CD8-positive, alpha-beta memory T cell (primary cell): ENCODE measurements at regions of chr3 and their contacts with region 1.

Region 1: DNA sequence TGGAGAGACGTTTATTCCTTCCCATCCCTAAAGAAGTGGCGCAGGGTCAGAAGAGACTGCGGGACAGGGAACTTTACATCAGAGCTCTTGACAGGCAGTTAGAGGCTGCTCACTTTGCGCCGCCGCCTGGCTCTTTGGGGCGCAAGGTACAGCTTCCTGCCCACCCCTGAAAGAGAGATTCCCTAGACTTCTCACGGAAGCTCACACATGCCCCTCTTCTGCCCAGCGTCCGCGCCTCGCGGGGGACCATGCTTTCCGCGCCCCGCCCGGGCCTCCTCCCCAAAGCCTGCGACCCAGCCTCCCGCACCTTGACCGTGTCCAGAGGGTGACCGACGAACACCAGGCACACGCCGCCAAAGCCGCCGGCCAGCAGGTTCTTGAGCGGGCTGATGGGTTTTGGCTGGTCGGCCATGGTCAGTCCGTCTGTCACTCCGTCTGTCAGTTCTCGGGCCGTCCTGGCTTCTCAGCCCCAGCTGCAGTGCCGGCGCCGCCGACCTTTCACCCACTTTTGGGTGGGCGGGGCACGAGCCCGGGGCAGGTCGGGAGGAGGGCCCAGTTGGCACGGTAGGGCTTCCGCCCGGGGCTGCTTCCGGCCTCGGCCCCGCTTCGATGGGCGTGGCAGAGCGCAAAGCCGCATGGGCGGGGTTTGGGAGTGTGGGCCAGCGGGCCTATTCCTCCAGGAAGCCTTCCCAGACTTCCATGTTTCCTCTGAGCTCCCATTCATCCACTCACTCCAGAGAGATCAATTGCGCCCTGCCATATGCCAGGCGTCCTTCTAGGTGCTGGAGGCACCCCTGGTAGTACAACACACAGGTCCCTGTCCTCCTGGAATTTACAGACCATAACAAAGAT is at the start of gene SLC25A20:
- DNase-seq: peak; percentile 83 to 91 (median 86)
- H3K4me3 ChIP-seq: peak within 1 kb of the TSS; percentile 85
- H3K4me3 Mint-ChIP-seq: peak within 1 kb of the TSS; percentile 95 to 99 (median 96)
- H3K27ac ChIP-seq: peak within 1 kb of the TSS; percentile 74
- H3K27ac Mint-ChIP-seq: peak within 1 kb of the TSS; percentile 89 to 100 (median 92)
- H3K4me1 ChIP-seq: peaks cover 38% of the 10 kb centered on the region
- H3K4me1 Mint-ChIP-seq: peaks cover 37 to 51% (median 41%) of the 10 kb centered on the region in 3 donors
- H3K27me3 ChIP-seq: no peaks in the 10 kb centered on the region
- H3K27me3 Mint-ChIP-seq: no peaks in the 10 kb centered on the region
- total RNA-seq, gene SLC25A20: 29.1 to 31.5 TPM

Region 2: GRCh38 chr3:48918388-48919214 is 20.0 kb after region 1 on chr3 and contains the start of gene ARIH2:
- CTCF ChIA-PET with region 1: interaction called, 22 read pairs
- POLR2A ChIA-PET with region 1: interaction called, 27 read pairs
- DNase-seq: peak; percentile 82 to 92 (median 87)
- H3K4me3 ChIP-seq: peak within 1 kb of the TSS; percentile 91
- H3K4me3 Mint-ChIP-seq: peak within 1 kb of the TSS; percentile 93 to 99 (median 98)
- H3K27ac ChIP-seq: peak within 1 kb of the TSS; percentile 98
- H3K27ac Mint-ChIP-seq: peak within 1 kb of the TSS; percentile 98 to 100 (median 99)
- H3K4me1 ChIP-seq: peaks cover 26% of the 10 kb centered on the region
- H3K4me1 Mint-ChIP-seq: peaks cover 23 to 41% (median 29%) of the 10 kb centered on the region in 3 donors
- H3K27me3 ChIP-seq: no peaks in the 10 kb centered on the region
- H3K27me3 Mint-ChIP-seq: no peaks in the 10 kb centered on the region
- total RNA-seq, gene ARIH2: 117 to 123 TPM

Region 3: DNA sequence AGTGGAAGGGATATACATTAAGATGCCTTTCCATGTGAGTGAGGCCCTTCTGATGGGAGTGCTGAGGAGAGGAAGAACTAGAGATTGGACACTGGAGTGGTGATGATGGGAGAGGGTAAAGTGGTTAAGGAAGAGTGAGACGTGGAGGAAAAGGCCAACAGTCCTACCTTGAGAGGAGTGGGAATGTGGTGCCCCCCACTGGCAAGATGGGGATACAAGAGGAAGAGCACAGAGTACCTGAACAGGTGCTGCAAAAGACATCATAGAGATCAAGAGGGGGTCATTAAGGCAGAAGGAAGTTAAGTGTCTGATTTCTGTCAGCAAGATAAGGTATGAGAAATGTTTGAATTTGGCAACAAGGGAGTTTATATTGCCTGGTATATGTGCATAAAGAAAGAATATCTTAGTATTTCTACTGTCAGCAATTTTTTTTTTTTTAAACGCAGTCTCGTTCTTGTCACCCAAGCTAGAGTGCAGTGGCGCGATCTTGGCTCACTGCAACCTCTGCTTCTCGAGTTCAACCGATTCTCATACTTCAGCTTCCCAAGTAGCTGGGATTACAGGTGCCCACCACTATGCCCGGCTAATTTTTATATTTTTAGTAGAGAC is 54.0 kb after region 1 on chr3:
- CTCF ChIA-PET with region 1: no interaction called
- POLR2A ChIA-PET with region 1: interaction called, 12 read pairs
- DNase-seq: peak; percentile 32 to 65 (median 38)
- H3K4me3 ChIP-seq: no peak overlapping the region
- H3K4me3 Mint-ChIP-seq: no peak overlapping the region
- H3K27ac ChIP-seq: no peak overlapping the region
- H3K27ac Mint-ChIP-seq: peak overlapping the region in 4 of 8 donors; percentile 3 to 66 (median 5)
- H3K4me1 ChIP-seq: no peaks in the 10 kb centered on the region
- H3K4me1 Mint-ChIP-seq: peaks cover 22 to 36% (median 25%) of the 10 kb centered on the region in 3 donors
- H3K27me3 ChIP-seq: no peaks in the 10 kb centered on the region
- H3K27me3 Mint-ChIP-seq: no peaks in the 10 kb centered on the region